ENCODE measurements at regions of chr3 and their contacts with region 1.

Region 1: GRCh38 chr3:20039766-20040475 is at the start of gene KAT2B:
- DNase-seq: peak; percentile 80 to 90
- H3K4me3 ChIP-seq: peak within 1 kb of the TSS; percentile 65
- H3K4me1 ChIP-seq: peaks cover 29% of the 10 kb centered on the region
- H3K27me3 ChIP-seq: no peaks in the 10 kb centered on the region

Region 2: DNA sequence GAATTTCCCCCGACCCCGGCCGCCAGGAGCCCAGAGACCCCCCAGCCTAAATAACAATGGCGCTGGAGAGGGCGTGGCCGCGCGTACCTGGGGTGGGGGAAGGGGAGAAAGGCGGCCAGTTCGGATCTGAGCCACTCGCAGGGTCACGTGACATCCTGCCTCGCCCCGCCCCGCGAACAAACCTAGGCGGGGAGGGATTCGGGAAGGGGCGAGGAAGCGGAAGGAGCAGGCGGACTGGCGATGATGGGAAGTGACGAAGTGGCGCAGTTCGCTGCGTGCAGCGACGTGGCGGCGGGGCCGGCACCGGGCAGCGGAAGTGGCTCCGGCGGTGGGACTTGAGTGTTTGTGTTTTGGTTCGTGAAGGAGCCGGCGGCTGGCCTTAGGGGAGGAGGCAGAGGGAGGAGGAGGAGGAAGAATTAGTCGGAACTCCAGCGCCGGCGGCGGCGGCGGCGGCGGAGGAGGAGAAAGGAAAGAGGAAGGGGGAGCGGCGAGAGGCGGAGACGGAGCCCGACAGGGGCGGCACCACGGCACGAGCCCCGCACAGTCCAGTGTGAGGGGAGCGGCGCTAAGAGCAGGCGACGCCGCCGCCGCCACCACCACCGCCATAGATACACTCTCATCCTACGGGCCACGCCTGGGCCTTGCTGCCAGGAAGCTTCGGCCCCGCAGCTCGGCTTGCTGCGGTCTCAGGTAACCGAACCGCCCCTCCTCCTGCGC is 92.9 kb before region 1 on chr3 and contains the start of gene RAB5A:
- in situ Hi-C with region 1: loop called (anchors 5 kb)
- DNase-seq: peak; percentile 99
- H3K4me3 ChIP-seq: peak within 1 kb of the TSS; percentile 93
- H3K4me1 ChIP-seq: peaks cover 18% of the 10 kb centered on the region
- H3K27me3 ChIP-seq: no peaks in the 10 kb centered on the region